ENCODE measurements at regions of chr19 and their contacts with region 1.

Region 1: DNA sequence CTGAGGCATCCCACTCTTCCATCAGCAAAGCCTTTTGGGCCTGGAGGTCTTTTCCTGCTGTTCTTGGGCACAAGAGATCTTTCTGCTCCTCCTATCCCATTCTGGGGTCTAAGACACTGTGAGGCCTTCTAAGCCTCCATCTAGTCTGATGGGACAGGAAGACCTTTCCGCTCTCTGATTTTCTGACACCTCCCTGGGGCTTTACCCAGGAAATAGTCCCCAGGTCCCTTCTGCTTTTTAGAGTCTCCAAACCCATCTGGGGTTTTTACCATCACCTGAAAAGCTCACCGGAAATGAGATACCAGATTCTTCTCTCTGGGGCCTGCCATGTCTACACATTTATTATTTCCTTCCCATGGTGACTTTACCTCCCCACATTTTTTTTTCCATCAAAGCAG is 21.1 kb downstream of the CLEC17A start:
- DNase-seq: no peak
- ATAC-seq: no peak

Region 2: GRCh38 chr19:14619404-14619803 is 15.4 kb after region 1 on chr19:
- intact Hi-C with region 1: loop called (anchors 1 kb)
- DNase-seq: no peak
- ATAC-seq: no peak

Region 3: DNA sequence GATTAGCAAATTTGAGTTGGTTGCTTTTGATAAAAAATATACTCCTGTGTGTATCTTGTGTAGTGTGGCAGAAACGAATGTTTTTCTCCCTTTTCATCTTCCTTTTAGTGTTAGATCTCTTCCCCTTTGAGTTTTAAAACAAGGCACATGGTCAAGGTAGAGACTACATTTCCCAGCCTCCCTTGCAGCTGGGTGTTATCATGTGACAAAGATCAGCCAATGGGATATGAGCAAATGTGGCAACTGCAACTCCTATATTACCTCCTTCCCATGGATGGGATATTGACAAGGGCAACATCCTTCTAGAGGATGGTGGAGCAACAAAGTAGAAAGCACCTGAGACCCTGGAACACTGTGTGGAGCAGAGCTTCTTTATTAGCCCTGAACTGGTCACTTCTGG is 28.3 kb after region 1 on chr19:
- intact Hi-C with region 1: no loop called
- DNase-seq: no peak
- ATAC-seq: no peak

Region 4: GRCh38 chr19:14655726-14656125 is 51.7 kb after region 1 on chr19:
- intact Hi-C with region 1: loop called (anchors 5 kb)
- DNase-seq: no peak
- ATAC-seq: no peak

Measured in sciatic nerve (tissue), 2 donors.